H1 (cell line): ENCODE measurements at regions of chr14 and their contacts with region 1.

Region 1: DNA sequence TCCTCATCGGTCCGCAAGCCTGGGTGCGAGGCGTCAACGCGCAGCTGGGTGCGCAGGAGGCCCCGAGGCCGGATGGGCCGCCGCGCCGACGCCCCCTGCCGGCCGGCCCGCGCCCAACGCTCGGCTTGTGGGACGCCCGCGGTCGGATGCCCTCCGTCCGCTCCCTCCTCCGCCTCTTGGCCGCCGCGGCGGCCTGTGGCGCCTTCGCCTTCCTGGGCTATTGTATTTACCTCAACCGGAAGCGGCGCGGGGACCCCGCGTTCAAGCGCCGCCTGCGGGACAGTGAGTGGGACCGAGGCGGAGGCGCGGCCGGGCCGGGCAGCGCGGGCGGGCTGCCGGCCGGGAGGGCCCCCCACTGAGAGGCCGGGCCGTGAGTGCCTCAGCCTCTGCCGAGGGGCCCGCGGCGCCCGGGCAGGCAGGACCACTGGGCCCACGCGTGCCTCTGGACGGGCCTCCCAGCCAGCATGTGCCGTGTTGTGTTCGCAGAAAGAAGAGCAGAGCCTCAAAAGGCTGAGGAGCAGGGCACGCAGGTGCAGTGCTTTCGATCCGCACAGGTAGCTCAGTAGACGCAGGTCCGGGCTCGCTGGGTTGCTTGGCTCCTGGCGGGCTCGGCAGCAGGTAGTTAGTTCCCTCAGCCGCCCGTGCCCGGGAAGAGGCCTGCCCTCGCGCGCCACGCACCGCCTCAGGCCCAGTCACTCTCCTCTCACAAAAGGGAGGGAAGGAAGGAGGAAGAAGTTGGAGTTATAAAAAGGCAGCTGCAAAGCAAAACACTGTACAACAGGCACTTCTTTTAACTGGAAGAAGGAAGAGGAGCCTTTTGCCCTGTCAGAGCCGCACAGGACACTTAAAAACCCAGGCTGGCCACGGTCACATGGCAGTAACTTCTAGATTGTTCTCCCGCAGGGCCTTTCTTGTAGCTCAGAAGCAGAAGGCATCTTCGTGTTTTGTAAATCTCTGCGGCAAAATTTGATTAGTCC is at the start of gene TOMM20L:
- DNase-seq: peak; percentile 53 to 90
- H3K4me3 ChIP-seq: peak within 1 kb of the TSS; percentile 51 to 68 (median 58)
- H3K27ac ChIP-seq: peak within 1 kb of the TSS; percentile 69
- H3K4me1 ChIP-seq: peaks cover 4 to 14% (median 7%) of the 10 kb centered on the region in 4 experiments; a peak in 6 of 7 replicates
- H3K27me3 ChIP-seq: peaks cover 0 to 9% (median 6%) of the 10 kb centered on the region in 4 experiments; a peak in 5 of 7 replicates
- CTCF ChIP-seq: peak; percentile 83 to 91 (median 89)
- EP300 ChIP-seq: peak in 1 of 2 experiments; percentile 64; a peak in 1 of 3 replicates
- POLR2A ChIP-seq: peak in 1 of 2 experiments; percentile 62; a peak in 1 of 3 replicates
- RAD21 ChIP-seq: peak in 1 of 2 experiments; percentile 53; a peak in 1 of 4 replicates
- total RNA-seq, gene TOMM20L: not detected in 2 replicates

Region 2: GRCh38 chr14:58353516-58354299 is 42.4 kb before region 1 on chr14:
- CTCF ChIA-PET with region 1: no interaction called
- POLR2A ChIA-PET with region 1: no interaction called
- DNase-seq: no peak
- H3K4me3 ChIP-seq: no peak overlapping the region
- H3K27ac ChIP-seq: no peak overlapping the region
- H3K4me1 ChIP-seq: no peaks in the 10 kb centered on the region
- H3K27me3 ChIP-seq: no peaks in the 10 kb centered on the region
- CTCF ChIP-seq: no peak
- EP300 ChIP-seq: no peak
- POLR2A ChIP-seq: no peak
- RAD21 ChIP-seq: no peak

Region 3: GRCh38 chr14:58427281-58428117 is 31.4 kb after region 1 on chr14 and contains the starts of genes KIAA0586 and TIMM9:
- CTCF ChIA-PET with region 1: interaction called, 6 read pairs
- POLR2A ChIA-PET with region 1: interaction called, 23 read pairs
- DNase-seq: peak; percentile 84 to 90
- H3K4me3 ChIP-seq: peak within 1 kb of the TSS; percentile 54 to 85 (median 82)
- H3K27ac ChIP-seq: peak within 1 kb of the TSS; percentile 91
- H3K4me1 ChIP-seq: no peaks in the 10 kb centered on the region
- H3K27me3 ChIP-seq: no peaks in the 10 kb centered on the region
- CTCF ChIP-seq: no peak
- EP300 ChIP-seq: peak in 1 of 2 experiments; percentile 87; a peak in 1 of 3 replicates
- POLR2A ChIP-seq: peak in 1 of 2 experiments; percentile 21; a peak in 1 of 3 replicates
- RAD21 ChIP-seq: no peak
- total RNA-seq, gene KIAA0586: 21.6 and 24.8 TPM in 2 replicates
- total RNA-seq, gene TIMM9: 52.2 and 58.2 TPM in 2 replicates